Heart right ventricle (tissue), 16 donors: ENCODE measurements at regions of chr18 and their contacts with region 1.

Region 1: GRCh38 chr18:45664824-45665763 is 49.8 kb downstream of the SLC14A2 start:
- DNase-seq: peak in 1 of 2 donors; percentile 46
- ATAC-seq: peak; percentile 47 to 82 (median 72)
- H3K4me3 ChIP-seq: no peak overlapping the region
- H3K27ac ChIP-seq: peak overlapping the region in 3 of 10 donors; percentile 9 to 61 (median 13)
- H3K4me1 ChIP-seq: peaks cover 0 to 35% (median 19%) of the 10 kb centered on the region in 9 donors
- H3K27me3 ChIP-seq: no peaks in the 10 kb centered on the region
- CTCF ChIP-seq: peak; percentile 86 to 97 (median 93)

Region 2: DNA sequence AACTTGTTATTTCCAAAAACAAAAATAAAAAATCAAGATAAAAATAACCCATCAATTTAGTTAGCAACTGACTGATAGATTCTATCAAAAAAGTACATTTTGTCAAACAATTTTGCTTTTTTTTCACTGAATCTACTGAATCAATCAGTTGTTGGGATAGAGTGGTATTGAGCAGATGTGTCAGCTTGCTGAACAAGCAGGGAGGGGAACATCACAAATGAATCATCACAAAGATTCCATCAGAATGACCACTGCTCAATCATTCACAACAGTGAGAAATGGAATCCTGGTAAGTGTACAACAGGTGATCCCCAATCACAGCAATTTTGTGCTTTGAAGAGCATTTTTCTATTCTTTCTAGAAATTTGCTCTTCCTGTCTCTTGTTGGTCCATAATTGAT is 62.2 kb before region 1 on chr18:
- intact Hi-C with region 1: no loop called
- DNase-seq: no peak
- ATAC-seq: no peak
- H3K4me3 ChIP-seq: no peak overlapping the region
- H3K27ac ChIP-seq: no peak overlapping the region
- H3K4me1 ChIP-seq: no peaks in the 10 kb centered on the region
- H3K27me3 ChIP-seq: peaks cover 0 to 6% (median 0%) of the 10 kb centered on the region in 7 donors
- CTCF ChIP-seq: no peak

Region 3: GRCh38 chr18:45722899-45723298 is 57.8 kb after region 1 on chr18:
- intact Hi-C with region 1: no loop called
- DNase-seq: peak; percentile 71 to 79
- ATAC-seq: peak in 7 of 8 donors; percentile 68 to 87 (median 80)
- H3K4me3 ChIP-seq: no peak overlapping the region
- H3K27ac ChIP-seq: no peak overlapping the region
- H3K4me1 ChIP-seq: peaks cover 0 to 5% (median 0%) of the 10 kb centered on the region in 9 donors
- H3K27me3 ChIP-seq: peaks cover 0 to 18% (median 4%) of the 10 kb centered on the region in 7 donors
- CTCF ChIP-seq: peak; percentile 42 to 86 (median 75)

Region 4: DNA sequence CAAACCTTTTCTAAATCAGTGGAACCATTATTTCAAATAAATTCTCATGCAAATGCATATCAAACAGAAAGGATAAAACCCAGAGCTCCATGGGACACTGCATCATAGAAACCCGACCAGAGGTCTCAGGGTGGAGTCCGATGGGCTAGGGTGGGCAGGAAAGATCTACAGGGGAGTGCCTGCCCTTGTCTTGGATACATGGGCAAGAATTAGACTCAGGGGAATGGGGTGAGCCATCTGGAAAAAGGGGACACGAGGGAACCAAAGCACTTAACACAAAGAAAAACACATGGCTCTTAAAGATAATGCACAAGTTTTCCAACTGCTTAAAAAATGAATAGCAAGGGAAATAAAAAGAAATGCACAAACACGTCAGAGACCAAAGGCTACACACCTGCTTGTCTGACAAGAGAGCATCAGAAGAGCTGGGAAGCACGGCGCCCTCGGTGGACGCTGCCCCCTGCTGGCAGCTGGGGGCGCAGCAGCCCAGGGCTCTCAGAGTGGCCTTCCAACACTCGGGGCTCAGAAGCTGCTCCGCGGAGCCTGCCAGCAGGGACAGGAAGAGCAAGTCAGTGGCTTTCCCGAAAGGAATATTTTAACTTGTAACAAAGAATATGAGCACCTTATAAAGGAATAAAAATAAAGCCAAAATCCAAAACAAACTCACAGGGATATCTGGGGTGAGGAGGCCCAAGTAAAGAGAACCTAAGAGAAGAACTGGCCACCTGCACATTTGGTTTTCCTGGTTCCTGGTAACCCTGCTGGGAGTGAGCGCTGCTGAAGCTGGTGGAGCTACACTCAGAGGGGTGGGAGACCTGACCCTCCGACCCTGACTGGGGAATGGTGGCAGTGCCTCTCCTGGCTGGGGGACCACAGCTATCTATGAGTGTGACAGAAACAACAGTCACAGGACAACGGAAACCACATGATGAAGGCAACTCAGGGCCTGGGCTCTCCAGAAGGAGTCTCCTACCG is 214.9 kb after region 1 on chr18:
- intact Hi-C with region 1: loop called in 2 of 10 experiments (anchors 5 to 10 kb)
- DNase-seq: peak; percentile 49 to 77
- ATAC-seq: peak; percentile 81 to 97 (median 94)
- H3K4me3 ChIP-seq: no peak overlapping the region
- H3K27ac ChIP-seq: peak overlapping the region in 1 of 10 donors; percentile 12
- H3K4me1 ChIP-seq: peaks cover 0 to 9% (median 3%) of the 10 kb centered on the region in 9 donors
- H3K27me3 ChIP-seq: no peaks in the 10 kb centered on the region
- CTCF ChIP-seq: peak; percentile 98 to 100 (median 99)

Region 5: DNA sequence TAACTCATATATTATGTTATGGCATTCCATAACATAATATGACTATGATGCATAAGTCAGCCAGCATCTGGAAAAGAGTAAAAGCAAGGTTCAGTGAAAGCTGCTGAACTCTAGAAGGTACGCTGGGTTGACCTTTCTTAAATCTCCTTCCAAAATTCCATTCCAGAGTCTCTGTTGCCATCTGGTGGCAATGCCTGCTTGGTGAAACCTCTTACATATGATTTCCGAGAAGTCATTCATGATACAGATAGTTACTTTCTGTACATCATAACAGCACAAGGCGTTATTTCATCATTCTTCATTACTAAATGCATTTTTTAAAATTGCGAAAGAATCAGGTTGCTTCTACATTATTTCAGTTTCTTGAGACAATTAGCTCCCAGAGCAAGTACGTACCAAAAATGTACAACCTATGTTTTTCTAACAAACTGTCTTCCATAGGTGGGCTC is 309.0 kb after region 1 on chr18:
- intact Hi-C with region 1: loop called in 8 of 10 experiments (anchors 5 to 10 kb)
- DNase-seq: peak in 1 of 2 donors; percentile 66
- ATAC-seq: peak; percentile 58 to 81 (median 70)
- H3K4me3 ChIP-seq: no peak overlapping the region
- H3K27ac ChIP-seq: peak overlapping the region in 1 of 10 donors; percentile 54
- H3K4me1 ChIP-seq: peaks cover 0 to 12% (median 0%) of the 10 kb centered on the region in 9 donors
- H3K27me3 ChIP-seq: no peaks in the 10 kb centered on the region
- CTCF ChIP-seq: peak; percentile 20 to 79 (median 71)

Region 6: DNA sequence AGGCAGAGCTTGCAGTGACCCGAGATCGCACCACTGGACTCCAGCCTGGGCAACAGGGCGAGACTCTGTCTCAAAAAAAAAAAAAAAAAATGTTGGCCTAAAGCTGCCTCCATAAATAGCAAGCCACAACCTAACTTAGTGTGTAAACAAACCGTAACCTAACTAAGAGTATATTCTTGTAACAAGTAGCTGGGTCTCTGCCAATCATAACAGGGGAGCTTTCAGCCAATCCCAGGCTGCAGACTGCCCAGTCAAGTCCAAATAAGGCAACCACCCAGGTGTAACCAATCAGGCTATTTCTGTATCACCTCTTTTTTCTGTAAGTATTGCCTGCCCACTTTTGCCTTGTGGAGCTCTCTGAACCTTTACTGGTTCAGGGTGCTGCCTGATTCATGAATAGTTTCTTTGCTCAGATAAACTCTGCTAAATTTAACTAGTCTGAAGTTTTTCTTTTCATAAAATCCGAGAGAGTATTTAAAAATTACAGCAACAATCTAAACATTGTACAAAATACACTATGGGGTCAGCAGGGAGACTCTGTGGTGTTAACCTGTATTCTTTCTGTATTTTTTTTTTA is 402.4 kb after region 1 on chr18:
- intact Hi-C with region 1: loop called in 6 of 10 experiments (anchors 5 to 10 kb)
- DNase-seq: no peak
- ATAC-seq: peak in 1 of 8 donors; percentile 27
- H3K4me3 ChIP-seq: no peak overlapping the region
- H3K27ac ChIP-seq: no peak overlapping the region
- H3K4me1 ChIP-seq: peaks cover 3 to 41% (median 10%) of the 10 kb centered on the region in 9 donors
- H3K27me3 ChIP-seq: no peaks in the 10 kb centered on the region
- CTCF ChIP-seq: no peak